Natural killer cell (primary cell): ENCODE measurements at regions of chr11 and their contacts with region 1.

Region 1: DNA sequence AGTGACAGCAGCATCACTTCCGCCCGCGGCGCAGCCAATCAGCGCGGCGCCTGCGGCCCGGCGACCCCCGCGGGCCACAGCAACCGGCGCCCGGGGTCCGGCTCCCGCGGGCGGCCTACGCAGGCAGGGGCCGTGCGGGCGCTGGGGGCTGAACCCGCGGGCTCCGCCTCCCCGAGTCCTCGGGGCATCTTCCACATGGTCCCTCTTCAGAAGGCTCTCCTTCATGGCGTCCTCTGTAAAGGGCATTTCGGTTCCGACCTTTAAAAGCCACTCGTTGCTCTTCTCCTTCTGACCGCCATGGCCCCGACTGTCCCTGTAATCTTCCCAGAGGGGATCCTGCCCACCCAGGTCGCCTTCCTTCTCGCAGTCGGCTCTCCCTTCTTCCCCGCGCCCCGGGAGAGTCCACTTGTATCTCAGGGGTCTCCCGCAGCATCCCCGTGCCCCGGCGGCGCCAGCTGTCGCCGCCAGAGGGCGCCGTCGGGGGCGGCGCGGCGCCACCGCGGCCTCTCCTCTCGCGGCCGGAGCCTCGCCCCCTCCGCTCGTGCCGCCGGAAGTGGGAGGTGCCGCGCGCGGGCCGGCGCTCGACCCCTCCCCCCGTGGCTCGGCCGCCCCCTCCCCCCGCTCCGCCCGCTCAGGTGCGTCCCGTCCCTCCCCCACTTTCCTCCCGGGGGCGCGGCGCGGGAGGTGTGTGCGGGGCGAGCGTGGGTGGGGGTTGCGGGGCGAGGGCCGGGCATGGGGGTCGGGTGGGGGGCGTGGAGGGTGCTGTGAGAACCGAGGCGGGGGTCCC is at the start of gene RNF214:
- DNase-seq: peak; percentile 76 to 90
- ATAC-seq: peak; percentile 75 to 91 (median 84)
- H3K4me3 ChIP-seq: peak within 1 kb of the TSS; percentile 98
- H3K4me3 Mint-ChIP-seq: peak within 1 kb of the TSS; percentile 96
- H3K27ac ChIP-seq: peak within 1 kb of the TSS; percentile 99
- H3K27ac Mint-ChIP-seq: peak within 1 kb of the TSS; percentile 93 to 99
- H3K4me1 ChIP-seq: peaks cover 37% of the 10 kb centered on the region
- H3K4me1 Mint-ChIP-seq: peaks cover 41 to 54% of the 10 kb centered on the region in 2 donors
- H3K27me3 ChIP-seq: no peaks in the 10 kb centered on the region
- H3K27me3 Mint-ChIP-seq: no peaks in the 10 kb centered on the region
- CTCF ChIP-seq: peak; percentile 94
- total RNA-seq, gene RNF214: 13.7 to 20.7 (median 17.3) TPM

Region 2: DNA sequence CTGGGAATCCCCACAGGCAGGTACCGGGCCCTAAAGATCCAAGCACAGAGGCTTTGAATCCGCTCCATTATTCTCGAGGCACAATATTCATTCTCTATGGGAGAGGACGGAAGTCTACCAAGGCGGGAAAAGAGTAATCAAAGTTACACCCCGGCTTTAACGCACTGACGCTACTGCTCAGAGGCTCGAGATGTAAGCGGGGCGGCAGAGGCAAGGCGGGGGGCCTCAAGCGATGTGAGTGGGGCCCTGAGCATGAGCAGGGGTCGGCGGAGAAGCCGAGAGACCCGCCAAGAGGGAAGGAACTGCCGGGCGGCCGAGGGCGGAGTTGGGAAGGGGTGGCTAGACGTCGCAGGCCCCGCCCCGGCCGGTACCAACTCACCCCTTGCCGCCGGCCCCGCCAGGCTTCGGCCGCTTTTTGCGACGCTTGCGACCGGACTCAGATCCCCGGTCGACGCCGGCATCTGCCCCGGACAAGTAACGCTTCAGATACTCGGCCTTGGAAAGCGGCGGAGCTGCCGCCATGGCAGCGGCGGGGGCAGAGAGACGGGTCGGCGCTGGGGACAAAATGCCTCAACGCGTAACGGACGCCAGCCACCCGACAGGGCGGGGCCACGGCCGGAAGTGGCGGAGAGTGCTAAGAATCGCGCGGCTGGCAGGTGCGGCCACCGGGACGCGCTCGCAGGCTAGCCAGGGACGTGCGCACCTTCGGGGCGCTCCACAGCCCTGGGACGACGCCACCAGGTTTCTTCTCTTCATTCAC is 459.7 kb before region 1 on chr11 and contains the start of gene BUD13:
- intact Hi-C with region 1: loop called (anchors 5 kb)
- DNase-seq: peak; percentile 96
- ATAC-seq: peak; percentile 90 to 96 (median 93)
- H3K4me3 ChIP-seq: peak within 1 kb of the TSS; percentile 99
- H3K4me3 Mint-ChIP-seq: peak within 1 kb of the TSS; percentile 99
- H3K27ac ChIP-seq: peak within 1 kb of the TSS; percentile 95
- H3K27ac Mint-ChIP-seq: peak within 1 kb of the TSS; percentile 97 to 98
- H3K4me1 ChIP-seq: peaks cover 15% of the 10 kb centered on the region
- H3K4me1 Mint-ChIP-seq: peaks cover 26 to 32% of the 10 kb centered on the region in 2 donors
- H3K27me3 ChIP-seq: no peaks in the 10 kb centered on the region
- H3K27me3 Mint-ChIP-seq: no peaks in the 10 kb centered on the region
- CTCF ChIP-seq: no peak
- total RNA-seq, gene BUD13: 13.5 to 16.0 (median 13.7) TPM

Region 3: DNA sequence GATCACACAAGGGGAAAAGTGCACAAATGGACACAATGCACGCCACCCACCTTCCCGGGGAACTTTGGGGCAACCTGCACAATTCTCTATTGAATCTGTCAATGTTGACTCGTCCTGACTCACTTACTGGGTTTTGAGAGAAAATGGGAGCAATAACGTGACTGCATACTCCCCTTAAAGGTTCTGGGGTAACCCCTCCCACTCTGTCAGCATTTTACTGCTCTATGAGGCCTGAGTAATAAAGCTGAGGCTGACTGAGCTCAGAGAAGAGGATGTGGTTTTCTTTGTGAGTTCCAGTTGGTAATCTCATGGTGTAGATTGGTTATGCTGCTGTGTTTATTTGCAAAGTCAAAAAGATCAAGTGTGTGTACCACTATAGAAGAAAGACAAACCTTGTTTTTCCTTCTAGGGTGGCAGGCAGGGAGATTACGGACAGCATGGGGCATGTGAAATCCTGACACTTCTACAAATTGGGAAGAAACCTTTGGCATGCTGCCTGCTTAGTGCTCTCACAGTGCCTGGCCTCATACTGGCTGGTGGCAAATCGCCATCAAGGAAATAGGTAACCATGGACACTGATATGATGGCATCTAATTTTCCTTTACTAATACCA is 378.7 kb before region 1 on chr11:
- intact Hi-C with region 1: loop called (anchors 1 kb)
- DNase-seq: peak; percentile 30 to 88
- ATAC-seq: peak; percentile 91 to 96 (median 94)
- H3K4me3 ChIP-seq: no peak overlapping the region
- H3K4me3 Mint-ChIP-seq: peak overlapping the region; percentile 88
- H3K27ac ChIP-seq: peak overlapping the region; percentile 73
- H3K27ac Mint-ChIP-seq: peak overlapping the region; percentile 92 to 93
- H3K4me1 ChIP-seq: peaks cover 58% of the 10 kb centered on the region
- H3K4me1 Mint-ChIP-seq: peaks cover 65 to 69% of the 10 kb centered on the region in 2 donors
- H3K27me3 ChIP-seq: no peaks in the 10 kb centered on the region
- H3K27me3 Mint-ChIP-seq: no peaks in the 10 kb centered on the region
- CTCF ChIP-seq: no peak

Region 4: DNA sequence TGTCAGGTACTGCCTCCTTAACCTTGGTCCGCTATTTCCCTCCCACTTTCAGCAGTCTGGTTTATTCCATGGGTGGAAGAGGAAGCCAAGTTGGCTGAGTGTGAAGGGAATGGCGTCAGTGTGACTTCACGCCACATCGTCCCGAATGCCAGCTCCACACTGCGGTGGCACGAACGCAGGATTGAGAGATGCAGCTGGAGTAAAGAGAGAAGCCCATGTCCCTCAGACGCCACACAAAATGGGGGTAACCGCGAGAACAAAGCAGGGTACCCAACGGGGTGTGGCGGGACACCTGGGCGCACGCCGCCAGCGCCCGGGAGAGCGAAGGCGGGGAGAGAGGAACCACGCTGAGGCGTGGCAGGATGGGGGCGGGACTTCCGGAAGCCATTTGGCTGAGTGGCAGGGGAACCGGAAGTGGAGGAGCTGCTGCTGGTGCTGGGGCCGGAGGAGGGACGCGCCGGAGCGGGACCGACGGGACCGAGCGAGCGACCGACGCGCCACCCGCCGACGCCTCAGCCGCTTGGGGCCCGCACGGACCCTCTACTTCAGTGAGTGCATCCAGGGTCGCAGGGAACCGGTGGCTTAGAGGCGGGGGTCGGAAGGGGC is 88.3 kb before region 1 on chr11 and contains the start of gene PAFAH1B2:
- intact Hi-C with region 1: loop called (anchors 1 kb)
- DNase-seq: peak; percentile 90 to 97
- ATAC-seq: peak; percentile 87 to 96 (median 93)
- H3K4me3 ChIP-seq: peak within 1 kb of the TSS; percentile 74
- H3K4me3 Mint-ChIP-seq: peak within 1 kb of the TSS; percentile 100
- H3K27ac ChIP-seq: peak within 1 kb of the TSS; percentile 74
- H3K27ac Mint-ChIP-seq: peak within 1 kb of the TSS; percentile 89 to 93
- H3K4me1 ChIP-seq: peaks cover 24% of the 10 kb centered on the region
- H3K4me1 Mint-ChIP-seq: peaks cover 32 to 36% of the 10 kb centered on the region in 2 donors
- H3K27me3 ChIP-seq: no peaks in the 10 kb centered on the region
- H3K27me3 Mint-ChIP-seq: peaks cover 12 to 30% of the 10 kb centered on the region in 2 donors
- CTCF ChIP-seq: no peak
- total RNA-seq, gene PAFAH1B2: 46.1 to 71.0 (median 58.8) TPM

Region 5: DNA sequence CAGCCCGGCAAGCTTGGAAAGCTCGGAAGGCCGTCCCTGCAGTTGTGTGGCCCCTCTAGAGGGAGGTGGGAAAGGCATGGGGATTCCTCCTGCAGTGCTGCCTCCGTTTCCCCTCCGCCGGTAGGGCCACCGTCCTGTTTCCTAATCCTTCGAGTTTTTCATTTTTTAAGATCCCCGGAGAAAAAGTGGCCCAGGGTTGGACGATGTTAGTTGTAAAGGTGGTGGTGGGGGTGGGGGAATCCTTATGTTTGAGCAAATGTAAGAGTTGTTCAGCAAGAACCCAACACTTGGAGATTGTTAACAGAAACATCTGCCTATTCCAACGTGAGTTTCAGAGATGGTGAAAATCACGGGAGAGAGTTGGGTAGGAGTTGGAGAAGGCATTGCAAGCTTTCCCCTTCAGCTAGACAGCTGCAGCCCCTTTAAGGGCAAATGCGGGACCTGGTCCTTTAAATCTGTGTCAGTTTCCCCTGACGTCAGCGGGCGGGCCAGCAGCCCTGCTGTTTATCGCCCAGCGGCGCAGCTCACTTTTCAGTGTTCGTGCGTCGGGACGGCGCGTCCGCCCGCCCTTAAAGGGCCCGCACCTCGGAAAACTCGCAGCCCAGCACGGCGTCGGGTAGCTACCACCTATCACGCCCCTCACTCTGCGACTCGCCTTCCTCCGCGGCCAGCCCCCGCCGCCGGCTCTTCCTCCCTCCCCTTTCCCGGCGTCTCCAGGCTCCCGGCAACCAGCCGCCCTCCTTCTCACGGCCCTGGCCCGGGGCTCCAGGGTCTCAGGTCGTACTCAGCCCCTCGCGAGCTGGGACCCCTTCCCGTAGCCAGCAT is 53.9 kb before region 1 on chr11 and contains the start of gene SIDT2:
- intact Hi-C with region 1: loop called (anchors 1 kb)
- DNase-seq: peak; percentile 84 to 94
- ATAC-seq: peak; percentile 92 to 97 (median 93)
- H3K4me3 ChIP-seq: peak within 1 kb of the TSS; percentile 72
- H3K4me3 Mint-ChIP-seq: peak within 1 kb of the TSS; percentile 95
- H3K27ac ChIP-seq: peak within 1 kb of the TSS; percentile 83
- H3K27ac Mint-ChIP-seq: peak within 1 kb of the TSS; percentile 86 to 92
- H3K4me1 ChIP-seq: peaks cover 34% of the 10 kb centered on the region
- H3K4me1 Mint-ChIP-seq: peaks cover 31 to 34% of the 10 kb centered on the region in 2 donors
- H3K27me3 ChIP-seq: no peaks in the 10 kb centered on the region
- H3K27me3 Mint-ChIP-seq: no peaks in the 10 kb centered on the region
- CTCF ChIP-seq: peak; percentile 13
- total RNA-seq, gene SIDT2: 80.0 to 111 (median 82.0) TPM

Region 6: DNA sequence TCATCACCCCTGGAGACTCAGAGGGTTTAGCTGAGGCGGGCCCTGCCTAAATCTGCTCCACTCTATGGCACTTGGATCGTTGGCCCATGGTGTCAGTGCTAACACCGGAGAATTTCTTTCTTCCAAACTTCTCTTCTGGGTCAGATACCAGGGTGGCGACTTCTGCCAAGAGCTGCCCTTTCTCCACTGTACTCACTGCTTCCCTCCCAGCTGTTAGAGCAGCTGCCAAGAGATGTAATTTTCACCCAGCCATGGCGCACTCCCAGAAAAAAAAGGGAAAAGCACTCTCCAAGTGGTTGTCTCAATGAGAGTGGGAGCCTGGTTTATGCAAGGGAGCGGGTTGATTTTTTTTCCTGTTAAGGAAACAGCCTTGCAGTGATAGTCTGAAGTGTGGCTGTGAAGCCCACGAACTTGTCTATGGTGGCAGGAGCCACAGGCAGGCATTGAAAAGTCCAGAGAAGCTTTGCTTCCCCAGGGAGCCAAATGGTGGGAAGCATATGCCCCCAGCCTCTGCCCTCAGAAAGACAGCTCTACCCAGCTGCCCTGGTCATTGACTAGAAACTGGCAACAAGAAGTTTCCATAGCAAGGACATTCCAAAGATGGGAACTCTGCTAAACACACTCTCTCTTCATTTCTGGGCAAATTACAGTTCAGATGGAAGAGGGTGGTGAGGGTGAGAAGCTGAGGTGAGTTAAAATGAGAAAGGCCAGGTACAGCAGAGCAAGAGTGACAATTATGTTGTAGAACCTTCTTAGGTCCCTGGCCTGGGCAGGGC is 11.1 kb before region 1 on chr11:
- intact Hi-C with region 1: no loop called
- DNase-seq: no peak
- ATAC-seq: no peak
- H3K4me3 ChIP-seq: no peak overlapping the region
- H3K4me3 Mint-ChIP-seq: no peak overlapping the region
- H3K27ac ChIP-seq: no peak overlapping the region
- H3K27ac Mint-ChIP-seq: peak overlapping the region in 1 of 2 donors; percentile 8
- H3K4me1 ChIP-seq: no peaks in the 10 kb centered on the region
- H3K4me1 Mint-ChIP-seq: peaks cover 5 to 18% of the 10 kb centered on the region in 2 donors
- H3K27me3 ChIP-seq: no peaks in the 10 kb centered on the region
- H3K27me3 Mint-ChIP-seq: no peaks in the 10 kb centered on the region
- CTCF ChIP-seq: no peak

Region 7: DNA sequence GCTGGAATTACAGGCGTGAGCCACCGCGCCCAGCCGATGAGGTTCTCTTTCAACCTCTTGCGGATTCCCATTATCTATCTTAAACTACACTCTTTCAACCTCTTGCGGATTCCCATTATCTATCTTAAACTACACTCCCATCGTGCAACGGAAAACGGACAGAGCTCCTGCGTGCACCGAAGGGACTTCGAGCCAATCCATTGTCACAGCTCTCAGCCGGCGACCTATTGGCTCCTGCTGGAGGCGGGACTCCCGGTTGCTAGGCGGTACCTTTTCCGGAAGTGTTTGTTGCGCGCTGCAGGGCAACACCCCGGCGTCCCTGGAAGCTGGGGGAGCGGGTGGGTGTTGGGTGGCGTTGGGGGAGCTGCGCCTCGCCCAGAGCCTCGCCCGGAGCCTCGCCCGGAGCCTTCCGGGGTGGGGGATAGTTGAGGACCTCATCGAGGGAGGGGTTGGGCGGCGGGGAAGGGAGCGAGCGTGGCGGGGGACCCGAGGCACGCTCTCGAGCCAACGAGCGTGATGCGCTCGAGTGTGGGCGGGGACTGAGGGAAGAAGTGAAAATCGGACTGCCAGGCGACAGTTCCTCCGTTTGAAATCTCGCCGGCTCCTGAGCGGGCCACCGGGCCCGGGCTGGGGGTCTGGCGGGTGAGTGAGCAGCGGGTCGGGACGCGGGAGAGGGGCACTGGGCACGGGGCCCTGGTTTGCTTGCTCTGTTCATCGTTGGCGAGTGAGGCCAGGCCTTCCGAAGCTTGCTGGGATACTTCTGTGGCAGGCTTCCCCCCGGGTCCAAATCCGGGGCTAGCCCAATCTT is 95.5 kb after region 1 on chr11 and contains the start of gene CEP164:
- intact Hi-C with region 1: loop called (anchors 5 kb)
- DNase-seq: peak; percentile 90 to 97
- ATAC-seq: peak; percentile 95 to 97 (median 95)
- H3K4me3 ChIP-seq: peak within 1 kb of the TSS; percentile 80
- H3K4me3 Mint-ChIP-seq: peak within 1 kb of the TSS; percentile 53
- H3K27ac ChIP-seq: peak within 1 kb of the TSS; percentile 85
- H3K27ac Mint-ChIP-seq: peak within 1 kb of the TSS in 1 of 2 donors; percentile 28
- H3K4me1 ChIP-seq: peaks cover 14% of the 10 kb centered on the region
- H3K4me1 Mint-ChIP-seq: no peaks in the 10 kb centered on the region
- H3K27me3 ChIP-seq: no peaks in the 10 kb centered on the region
- H3K27me3 Mint-ChIP-seq: no peaks in the 10 kb centered on the region
- CTCF ChIP-seq: no peak
- total RNA-seq, gene CEP164: 45.6 to 49.9 (median 49.8) TPM